ENCODE measurements at regions of chr18 and their contacts with region 1.

Region 1: GRCh38 chr18:27017901-27018500 is 152.5 kb upstream of the AQP4 start:
- DNase-seq: no peak
- ATAC-seq: no peak
- H3K4me3 ChIP-seq: no peak overlapping the region
- H3K27ac ChIP-seq: no peak overlapping the region
- H3K4me1 ChIP-seq: no peaks in the 10 kb centered on the region
- H3K27me3 ChIP-seq: peaks cover 5% of the 10 kb centered on the region; the same call in 1 of the 2 replicates
- CTCF ChIP-seq: peak; percentile 17 to 59 (median 51); a peak in 4 of 6 replicates
- POLR2A ChIP-seq: no peak
- RAD21 ChIP-seq: peak; percentile 60

Region 2: GRCh38 chr18:27298214-27298804 is 280.3 kb after region 1 on chr18:
- CTCF ChIA-PET with region 1: interaction called, 7 read pairs
- POLR2A ChIA-PET with region 1: no interaction called
- RAD21 ChIA-PET with region 1: no interaction called
- intact Hi-C with region 1: loop called (anchors 10 kb)
- DNase-seq: no peak
- ATAC-seq: no peak
- H3K4me3 ChIP-seq: no peak overlapping the region
- H3K27ac ChIP-seq: no peak overlapping the region
- H3K4me1 ChIP-seq: no peaks in the 10 kb centered on the region
- H3K27me3 ChIP-seq: no peaks in the 10 kb centered on the region
- CTCF ChIP-seq: peak in 1 of 3 experiments; percentile 22; a peak in 1 of 6 replicates
- POLR2A ChIP-seq: no peak
- RAD21 ChIP-seq: peak; percentile 10; the same call in 1 of the 2 replicates

Region 3: DNA sequence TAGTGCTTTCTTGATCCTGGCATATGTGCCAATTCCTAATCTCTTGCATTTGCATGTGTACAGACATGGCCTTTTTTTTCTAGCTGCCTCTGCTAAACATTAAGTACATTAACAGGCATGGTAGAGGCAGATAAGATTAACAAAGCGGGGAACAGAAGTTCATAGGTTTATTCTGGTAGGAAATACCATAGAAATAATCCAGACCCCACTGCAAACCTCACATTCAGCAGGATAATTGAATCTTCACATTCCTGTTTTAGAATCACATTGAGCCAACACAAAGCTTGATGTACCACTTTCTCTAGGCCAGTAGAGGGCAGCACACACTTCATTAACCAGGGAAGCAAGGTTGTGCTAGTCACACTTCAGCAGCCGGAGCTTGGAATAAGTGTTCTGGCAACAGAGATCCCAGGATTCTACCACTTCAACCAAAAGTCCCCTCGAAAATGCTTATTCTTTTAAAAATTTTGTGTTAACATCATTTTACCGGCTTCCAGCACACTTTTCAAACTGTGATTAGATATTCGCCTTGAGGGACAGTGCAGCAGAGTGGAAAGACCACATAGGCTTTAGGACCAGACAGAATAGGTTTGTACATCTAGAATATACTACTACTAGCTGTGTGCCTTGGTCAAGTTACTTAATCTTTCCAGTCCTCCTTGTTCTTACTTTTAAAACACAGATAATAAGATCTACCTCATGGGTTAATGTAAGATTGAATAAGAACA is 587.3 kb after region 1 on chr18:
- CTCF ChIA-PET with region 1: interaction called, 12 read pairs
- POLR2A ChIA-PET with region 1: no interaction called
- RAD21 ChIA-PET with region 1: no interaction called
- intact Hi-C with region 1: no loop called
- DNase-seq: peak; percentile 28
- ATAC-seq: peak; percentile 77
- H3K4me3 ChIP-seq: no peak overlapping the region
- H3K27ac ChIP-seq: no peak overlapping the region
- H3K4me1 ChIP-seq: no peaks in the 10 kb centered on the region
- H3K27me3 ChIP-seq: no peaks in the 10 kb centered on the region
- CTCF ChIP-seq: peak in 2 of 3 experiments; percentile 68 to 78; a peak in 4 of 6 replicates
- POLR2A ChIP-seq: no peak
- RAD21 ChIP-seq: peak; percentile 55

Measured in HCT116 (cell line).